ENCODE measurements at regions of chr14 and their contacts with region 1.

Region 1: GRCh38 chr14:67934008-67934481 is 114.5 kb downstream of the RAD51B start:
- DNase-seq: no peak
- H3K4me3 Mint-ChIP-seq: no peak overlapping the region
- H3K27ac Mint-ChIP-seq: no peak overlapping the region
- H3K4me1 Mint-ChIP-seq: peaks cover 5% of the 10 kb centered on the region
- H3K27me3 Mint-ChIP-seq: no peaks in the 10 kb centered on the region

Region 2: GRCh38 chr14:67837011-67837624 is 96.9 kb before region 1 on chr14:
- intact Hi-C with region 1: loop called (anchors 5 kb)
- DNase-seq: no peak
- H3K4me3 Mint-ChIP-seq: no peak overlapping the region
- H3K27ac Mint-ChIP-seq: no peak overlapping the region
- H3K4me1 Mint-ChIP-seq: no peaks in the 10 kb centered on the region
- H3K27me3 Mint-ChIP-seq: no peaks in the 10 kb centered on the region

Region 3: DNA sequence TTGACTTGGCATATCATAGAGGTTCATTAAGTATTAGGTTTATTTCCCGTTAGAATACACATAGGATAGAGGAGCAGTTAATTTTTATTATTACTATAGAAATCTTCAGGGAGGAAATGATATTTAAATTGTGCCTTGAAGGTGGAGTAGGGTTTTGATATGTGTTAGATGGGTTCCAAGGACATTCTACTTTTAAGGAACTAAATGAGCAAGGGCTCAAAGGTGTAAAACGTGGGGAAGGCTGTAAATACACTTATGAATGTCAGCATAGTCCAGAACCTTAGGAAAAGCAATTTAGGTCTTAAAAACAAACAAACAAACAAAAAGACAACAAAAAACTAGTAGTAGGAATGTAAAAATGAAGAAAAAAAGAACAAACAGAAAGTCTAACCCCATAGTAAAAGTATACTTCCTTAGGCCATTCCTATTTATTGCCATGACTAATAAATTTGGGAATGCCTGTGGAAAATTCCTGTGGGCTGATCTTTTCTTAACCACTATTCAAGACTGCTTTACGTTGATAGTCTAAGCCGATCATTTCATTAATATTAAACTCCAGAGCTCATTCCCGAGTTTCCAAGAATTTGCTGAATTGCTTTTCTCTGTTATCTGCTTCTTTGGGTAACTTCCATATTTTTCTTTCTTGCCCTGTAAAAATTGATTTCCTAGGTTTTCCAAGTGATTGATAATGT is 65.8 kb after region 1 on chr14:
- intact Hi-C with region 1: no loop called
- DNase-seq: no peak
- H3K4me3 Mint-ChIP-seq: no peak overlapping the region
- H3K27ac Mint-ChIP-seq: no peak overlapping the region
- H3K4me1 Mint-ChIP-seq: no peaks in the 10 kb centered on the region
- H3K27me3 Mint-ChIP-seq: no peaks in the 10 kb centered on the region

Region 4: GRCh38 chr14:68011406-68012028 is 77.5 kb after region 1 on chr14:
- intact Hi-C with region 1: no loop called
- DNase-seq: no peak
- H3K4me3 Mint-ChIP-seq: no peak overlapping the region
- H3K27ac Mint-ChIP-seq: no peak overlapping the region
- H3K4me1 Mint-ChIP-seq: no peaks in the 10 kb centered on the region
- H3K27me3 Mint-ChIP-seq: peaks cover 4% of the 10 kb centered on the region

Region 5: DNA sequence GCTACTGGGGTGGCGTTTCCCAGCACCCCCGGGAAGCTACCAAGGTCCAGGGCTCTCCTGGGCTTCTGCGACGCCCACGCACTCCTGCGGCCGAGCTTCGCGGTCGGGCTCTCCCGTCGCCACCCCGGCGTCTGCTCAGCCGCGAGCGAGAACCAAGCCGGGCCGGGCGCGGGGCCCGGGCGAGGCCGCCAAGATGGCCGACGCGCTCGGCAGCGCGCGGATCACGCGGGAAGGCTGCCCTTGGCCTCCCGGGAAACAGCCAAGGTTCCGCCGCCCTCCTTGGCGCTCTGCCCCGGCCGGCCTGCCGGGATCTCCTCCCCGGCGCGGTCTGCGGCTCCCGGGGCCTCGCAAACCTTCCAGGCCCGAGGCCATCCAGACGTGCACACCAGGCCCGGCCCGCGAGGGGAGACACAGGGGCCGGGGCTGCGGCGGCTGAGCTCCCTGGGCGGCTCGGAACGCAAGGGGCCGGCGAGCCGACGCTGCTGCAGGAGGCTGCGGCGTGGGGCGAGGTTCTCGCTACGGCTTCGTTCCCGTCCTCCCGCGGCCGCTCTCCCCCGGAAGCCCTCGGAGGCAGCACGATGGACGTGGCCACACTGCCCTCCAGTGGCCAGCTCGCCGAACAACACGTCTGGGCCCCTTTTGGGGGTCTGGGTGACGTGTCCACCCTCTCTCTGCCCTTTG is 882.4 kb after region 1 on chr14:
- intact Hi-C with region 1: loop called (anchors 2 kb)
- DNase-seq: peak; percentile 84
- H3K4me3 Mint-ChIP-seq: peak overlapping the region; percentile 76
- H3K27ac Mint-ChIP-seq: peak overlapping the region; percentile 90
- H3K4me1 Mint-ChIP-seq: peaks cover 58% of the 10 kb centered on the region
- H3K27me3 Mint-ChIP-seq: no peaks in the 10 kb centered on the region

Region 6: GRCh38 chr14:69107407-69108003 is 1173.5 kb after region 1 on chr14:
- intact Hi-C with region 1: loop called (anchors 10 kb)
- DNase-seq: no peak
- H3K4me3 Mint-ChIP-seq: no peak overlapping the region
- H3K27ac Mint-ChIP-seq: no peak overlapping the region
- H3K4me1 Mint-ChIP-seq: no peaks in the 10 kb centered on the region
- H3K27me3 Mint-ChIP-seq: no peaks in the 10 kb centered on the region